ENCODE measurements at regions of chr11 and their contacts with region 1.

Region 1: DNA sequence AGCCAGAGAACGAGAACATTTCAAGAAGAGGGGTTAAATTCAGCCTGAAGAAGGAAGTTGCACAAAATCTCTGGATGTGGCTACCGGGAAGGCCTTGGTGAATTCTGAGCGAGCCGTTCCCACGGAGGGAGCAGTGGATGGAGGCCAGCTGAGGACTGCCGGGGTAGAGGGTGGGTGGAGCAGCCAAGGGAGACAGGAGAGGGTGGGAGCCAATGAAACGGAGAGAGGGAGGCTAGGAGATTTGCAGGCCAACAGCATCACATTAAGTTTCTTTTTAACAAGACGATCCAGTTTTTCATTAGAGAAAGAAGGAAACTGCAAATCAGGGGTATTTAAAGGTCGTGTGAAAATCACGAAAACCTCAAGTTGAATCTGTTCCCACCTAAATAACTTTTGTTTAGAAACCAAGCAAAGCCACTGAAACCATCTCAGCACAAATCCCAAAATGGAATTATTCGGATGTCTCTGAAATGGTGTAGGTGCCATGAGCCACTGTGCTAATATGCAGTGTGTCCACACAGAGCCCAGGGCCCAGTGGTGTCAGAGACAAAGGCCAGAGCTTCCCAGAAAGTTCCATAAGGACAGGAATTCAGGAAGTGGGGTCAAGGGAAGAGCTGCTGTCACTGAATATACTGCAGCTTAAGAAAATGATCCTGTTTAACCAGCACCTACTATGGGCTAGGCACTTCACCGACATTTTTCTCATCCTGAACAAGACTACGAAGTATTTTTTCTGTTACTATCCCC is 59.7 kb upstream of the SLC35C1 start:
- DNase-seq: no peak
- ATAC-seq: no peak
- H3K4me3 ChIP-seq: no peak overlapping the region
- H3K27ac ChIP-seq: peak overlapping the region in 3 of 4 donors; percentile 3 to 53 (median 46)
- H3K4me1 ChIP-seq: peaks cover 13 to 15% of the 10 kb centered on the region in 2 donors
- H3K27me3 ChIP-seq: no peaks in the 10 kb centered on the region
- CTCF ChIP-seq: no peak
- POLR2A ChIP-seq: no peak

Region 2: DNA sequence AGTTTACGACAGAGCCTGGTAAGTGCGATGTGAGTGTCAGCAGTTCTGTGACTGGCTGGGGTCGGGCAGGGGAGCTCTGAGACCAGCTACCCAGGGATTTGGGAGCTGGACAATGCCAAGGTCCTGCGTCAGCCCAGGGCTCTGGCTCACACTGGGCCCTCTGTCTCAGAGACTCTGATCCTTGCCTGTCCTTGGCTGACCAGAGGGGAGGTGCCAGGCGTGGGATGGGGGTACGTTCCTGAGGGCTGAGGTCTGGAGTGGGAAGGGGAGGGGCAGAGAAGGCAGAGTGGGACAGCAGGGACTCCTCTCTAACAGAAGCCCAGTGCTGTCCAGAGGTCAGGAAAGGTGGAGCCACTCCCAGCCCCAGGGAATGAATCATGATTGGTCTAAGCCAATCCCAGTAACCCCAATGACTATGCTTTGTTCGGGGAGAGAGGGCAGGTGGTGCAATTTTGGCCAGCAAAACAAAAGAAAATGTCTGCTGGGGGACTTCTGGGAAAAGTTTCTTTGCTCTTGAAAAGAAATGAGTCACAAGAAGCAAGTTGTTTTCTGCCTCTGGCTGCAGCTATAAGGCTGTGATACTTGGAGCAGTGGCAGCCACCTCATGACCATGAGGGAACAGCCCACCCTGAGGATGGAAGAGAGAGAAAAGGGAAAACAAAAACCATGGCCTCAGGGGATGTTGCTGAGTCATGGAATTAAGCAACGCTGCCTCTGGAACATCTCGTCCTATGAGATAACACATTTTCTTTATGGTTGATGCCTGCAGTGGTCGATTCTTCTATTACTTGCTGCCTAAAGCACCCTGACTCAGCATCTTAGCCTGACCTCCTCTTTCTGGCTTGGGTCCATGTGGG is 188.2 kb before region 1 on chr11:
- in situ Hi-C with region 1: no loop called
- intact Hi-C with region 1: loop called (anchors 10 kb)
- DNase-seq: peak; percentile 18 to 68
- ATAC-seq: peak in 1 of 2 donors; percentile 25
- H3K4me3 ChIP-seq: no peak overlapping the region
- H3K27ac ChIP-seq: peak overlapping the region in 2 of 4 donors; percentile 80 to 89
- H3K4me1 ChIP-seq: peaks cover 25 to 58% of the 10 kb centered on the region in 2 donors
- H3K27me3 ChIP-seq: no peaks in the 10 kb centered on the region
- CTCF ChIP-seq: no peak
- POLR2A ChIP-seq: no peak

Region 3: DNA sequence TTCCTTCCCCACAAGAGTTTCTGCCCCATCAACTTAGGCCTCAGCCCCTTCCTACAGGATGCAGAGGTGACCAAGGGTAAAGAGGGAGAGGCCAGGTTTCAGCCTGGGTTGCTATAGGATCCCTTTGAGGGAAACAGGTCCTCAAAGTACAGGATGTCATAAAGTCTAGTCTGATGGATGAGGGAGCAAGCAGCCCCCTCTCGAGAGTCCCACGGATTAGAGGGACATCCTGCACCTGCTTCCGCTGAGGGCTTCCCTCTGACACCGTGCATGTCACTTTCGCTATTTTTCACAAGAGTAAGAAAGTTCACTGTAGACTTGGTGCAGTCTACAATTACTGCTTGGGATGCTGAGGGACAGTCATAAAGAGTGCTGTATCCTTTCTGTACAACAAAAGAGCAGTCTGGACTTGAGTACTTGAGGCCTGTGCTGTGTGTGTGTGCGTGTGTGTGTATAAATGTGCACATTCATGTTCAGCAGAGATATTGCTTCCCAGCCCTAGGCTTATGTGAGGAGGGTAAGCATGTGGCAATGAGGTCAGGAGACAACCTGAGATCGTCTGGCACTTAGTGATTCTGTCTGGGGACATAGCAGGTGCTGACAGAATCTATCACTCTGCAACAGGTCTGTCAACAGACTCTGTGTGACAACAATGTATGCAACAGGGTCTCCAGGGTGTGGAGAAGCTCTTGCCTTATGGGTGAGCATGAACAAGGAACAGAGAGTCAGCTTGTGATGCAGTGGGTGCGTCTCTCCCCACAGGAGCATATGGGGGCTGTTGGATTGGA is 61.8 kb before region 1 on chr11:
- in situ Hi-C with region 1: no loop called
- intact Hi-C with region 1: no loop called
- DNase-seq: no peak
- ATAC-seq: peak; percentile 76 to 79
- H3K4me3 ChIP-seq: no peak overlapping the region
- H3K27ac ChIP-seq: no peak overlapping the region
- H3K4me1 ChIP-seq: no peaks in the 10 kb centered on the region
- H3K27me3 ChIP-seq: no peaks in the 10 kb centered on the region
- CTCF ChIP-seq: no peak
- POLR2A ChIP-seq: no peak

Region 4: GRCh38 chr11:45794169-45794568 is 48.9 kb after region 1 on chr11:
- in situ Hi-C with region 1: no loop called
- intact Hi-C with region 1: no loop called
- DNase-seq: no peak
- ATAC-seq: no peak
- H3K4me3 ChIP-seq: no peak overlapping the region
- H3K27ac ChIP-seq: no peak overlapping the region
- H3K4me1 ChIP-seq: no peaks in the 10 kb centered on the region
- H3K27me3 ChIP-seq: peaks cover 0 to 5% (median 5%) of the 10 kb centered on the region in 3 donors
- CTCF ChIP-seq: no peak
- POLR2A ChIP-seq: no peak

Measured in gastrocnemius medialis (tissue), 4 donors.